ENCODE measurements at regions of chr6 and their contacts with region 1.

Region 1: GRCh38 chr6:89970609-89971337 is 76.5 kb downstream of the GJA10 start:
- DNase-seq: peak; percentile 36 to 61
- H3K4me3 ChIP-seq: no peak overlapping the region
- H3K27ac ChIP-seq: peak overlapping the region; percentile 56
- H3K4me1 ChIP-seq: peaks cover 5% of the 10 kb centered on the region; the same call in 1 of the 2 replicates
- H3K27me3 ChIP-seq: no peaks in the 10 kb centered on the region
- CTCF ChIP-seq: peak; percentile 69

Region 2: DNA sequence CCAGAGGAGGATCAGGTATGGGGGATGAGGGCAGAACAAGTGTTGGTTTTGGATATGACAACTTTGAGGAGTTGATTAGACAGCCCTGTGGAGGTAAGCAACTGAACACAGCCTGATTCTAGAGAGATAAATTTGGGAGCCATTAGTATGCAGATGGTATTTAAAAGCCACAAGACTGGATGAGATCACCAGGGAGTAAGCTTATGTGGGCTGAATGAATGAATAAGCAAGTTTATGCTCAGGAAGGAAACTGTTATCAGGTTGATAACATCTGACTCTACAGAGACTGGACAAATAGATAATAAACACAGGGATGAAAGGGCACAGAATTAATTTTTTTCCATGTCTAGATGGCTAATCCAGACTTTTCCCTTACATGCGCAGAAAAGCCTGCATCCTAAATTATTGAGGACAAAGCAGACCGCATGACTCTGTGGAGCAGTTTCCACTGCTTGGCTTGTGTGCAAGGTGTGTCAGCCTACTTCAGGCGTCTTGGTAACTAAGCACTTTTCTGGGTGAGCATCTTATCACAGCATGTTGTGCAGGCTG is 74.1 kb after region 1 on chr6:
- CTCF ChIA-PET with region 1: no interaction called
- POLR2A ChIA-PET with region 1: no interaction called
- intact Hi-C with region 1: no loop called
- DNase-seq: no peak
- H3K4me3 ChIP-seq: no peak overlapping the region
- H3K27ac ChIP-seq: no peak overlapping the region
- H3K4me1 ChIP-seq: no peaks in the 10 kb centered on the region
- H3K27me3 ChIP-seq: no peaks in the 10 kb centered on the region
- CTCF ChIP-seq: no peak

Region 3: DNA sequence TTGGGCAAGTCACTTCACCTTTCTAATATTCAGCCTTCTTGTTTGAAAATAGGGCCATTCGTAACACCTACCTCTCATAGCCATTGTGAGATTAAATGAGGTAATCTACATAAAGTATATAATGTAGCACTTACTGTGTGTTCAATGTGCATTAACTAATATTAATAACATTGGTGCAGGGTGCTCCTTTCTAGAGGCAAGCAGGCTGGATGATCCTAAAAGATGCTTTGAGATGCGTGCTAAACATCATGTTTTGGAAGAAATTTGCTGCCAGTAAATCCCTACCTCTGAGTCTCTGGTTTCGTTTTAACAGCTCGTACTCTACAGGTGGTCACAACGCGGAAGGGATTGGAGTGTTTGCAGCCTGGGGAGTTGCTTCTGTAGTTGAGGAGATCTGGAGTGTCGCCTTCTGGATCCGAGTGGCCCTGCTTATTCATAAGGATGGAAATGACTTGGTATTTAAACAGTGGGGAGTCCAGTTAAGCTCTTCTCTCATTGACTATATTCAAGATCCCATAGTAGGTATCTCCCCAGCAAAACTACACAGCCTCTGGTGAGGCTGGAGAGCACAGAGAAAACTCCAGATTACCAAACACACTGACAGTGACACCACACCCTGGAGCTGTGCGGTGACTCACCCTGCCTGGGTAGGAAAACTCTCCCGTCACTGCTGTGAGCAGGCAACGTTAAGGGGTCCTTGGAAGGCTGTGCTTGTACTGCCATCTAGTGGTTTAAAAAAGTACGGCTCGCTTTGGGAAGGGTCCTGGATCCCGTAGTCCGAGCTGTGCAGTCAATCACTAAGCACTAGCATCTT is 508.2 kb after region 1 on chr6:
- CTCF ChIA-PET with region 1: interaction called, 3 read pairs
- POLR2A ChIA-PET with region 1: no interaction called
- intact Hi-C with region 1: loop called (anchors 1 kb)
- DNase-seq: peak; percentile 81 to 82
- H3K4me3 ChIP-seq: no peak overlapping the region
- H3K27ac ChIP-seq: no peak overlapping the region
- H3K4me1 ChIP-seq: no peaks in the 10 kb centered on the region
- H3K27me3 ChIP-seq: no peaks in the 10 kb centered on the region
- CTCF ChIP-seq: peak; percentile 81

Measured in PC-9 (cell line).